Right lobe of liver (tissue), 6 donors: ENCODE measurements at regions of chr9 and their contacts with region 1.

Region 1: GRCh38 chr9:83937911-83938323 is 16.7 kb upstream of the KIF27 start:
- DNase-seq: no peak
- ATAC-seq: peak; percentile 63 to 73 (median 65)
- H3K4me3 ChIP-seq: no peak overlapping the region
- H3K27ac ChIP-seq: no peak overlapping the region
- H3K4me1 ChIP-seq: peaks cover 0 to 28% (median 8%) of the 10 kb centered on the region in 4 donors
- H3K27me3 ChIP-seq: no peaks in the 10 kb centered on the region
- CTCF ChIP-seq: peak; percentile 62 to 75 (median 72)
- POLR2A ChIP-seq: no peak

Region 2: GRCh38 chr9:84170521-84171141 is 232.7 kb after region 1 on chr9:
- intact Hi-C with region 1: loop called (anchors 5 to 10 kb)
- DNase-seq: peak in 1 of 3 donors; percentile 24
- ATAC-seq: peak; percentile 55 to 81 (median 74)
- H3K4me3 ChIP-seq: no peak overlapping the region
- H3K27ac ChIP-seq: no peak overlapping the region
- H3K4me1 ChIP-seq: no peaks in the 10 kb centered on the region
- H3K27me3 ChIP-seq: no peaks in the 10 kb centered on the region
- CTCF ChIP-seq: peak in 1 of 4 donors; percentile 9
- POLR2A ChIP-seq: no peak

Region 3: GRCh38 chr9:84261082-84261746 is 323.3 kb after region 1 on chr9:
- intact Hi-C with region 1: loop called (anchors 5 to 10 kb)
- DNase-seq: peak; percentile 80 to 84 (median 80)
- ATAC-seq: peak; percentile 100
- H3K4me3 ChIP-seq: no peak overlapping the region
- H3K27ac ChIP-seq: no peak overlapping the region
- H3K4me1 ChIP-seq: no peaks in the 10 kb centered on the region
- H3K27me3 ChIP-seq: no peaks in the 10 kb centered on the region
- CTCF ChIP-seq: peak; percentile 81 to 95 (median 92)
- POLR2A ChIP-seq: no peak